ENCODE measurements at regions of chr17 and their contacts with region 1.

Region 1: GRCh38 chr17:42843358-42843934 is 934 bp upstream of the AOC2 start:
- DNase-seq: peak in 1 of 10 donors; percentile 57
- H3K4me3 ChIP-seq: no peak overlapping the region
- H3K27ac ChIP-seq: no peak overlapping the region
- H3K27me3 ChIP-seq: no peaks in the 10 kb centered on the region
- CTCF ChIP-seq: peak; percentile 65 to 93 (median 81)

Region 2: DNA sequence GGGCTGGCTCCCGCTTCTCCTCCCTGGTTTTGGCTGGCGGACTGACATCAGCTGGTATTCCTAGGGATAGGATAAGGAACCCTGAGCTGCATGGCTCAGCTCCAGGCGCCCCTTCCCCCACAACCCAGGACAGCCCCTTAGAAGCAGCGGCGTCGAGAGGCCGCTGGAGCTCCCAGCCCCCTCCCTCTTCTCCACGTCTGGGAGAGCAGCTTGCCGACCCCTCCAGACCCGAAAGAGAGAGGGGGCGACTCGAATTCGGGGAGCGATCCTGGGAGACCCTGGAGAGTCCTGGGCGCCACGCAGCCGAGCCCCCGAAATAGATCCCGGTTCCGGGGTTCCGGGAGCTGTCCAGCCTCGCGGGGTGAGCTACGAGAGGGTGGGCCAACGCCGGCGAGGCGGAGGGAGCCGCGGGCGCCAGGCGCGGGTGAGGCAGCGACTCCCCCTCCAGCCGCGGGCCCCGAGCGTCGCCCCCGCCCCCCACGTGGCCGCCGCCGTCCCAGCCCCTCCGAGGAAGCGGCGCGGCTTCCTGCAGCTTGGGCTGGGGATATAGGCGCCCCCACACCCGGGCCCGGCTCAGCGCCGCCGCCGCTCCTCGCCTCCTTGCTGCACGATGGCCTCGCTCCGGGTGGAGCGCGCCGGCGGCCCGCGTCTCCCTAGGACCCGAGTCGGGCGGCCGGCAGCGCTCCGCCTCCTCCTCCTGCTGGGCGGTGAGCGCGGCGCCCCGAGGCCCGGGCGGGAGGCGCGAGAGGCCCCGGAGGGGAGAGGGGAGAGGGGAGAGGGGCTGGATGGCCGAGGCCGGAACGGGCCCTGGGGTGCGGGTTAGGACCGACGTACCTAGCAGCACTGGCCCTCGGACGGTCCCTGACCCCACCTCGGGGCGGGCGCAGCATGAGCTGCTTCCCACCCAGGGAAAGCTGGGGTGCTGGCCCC is 82.5 kb before region 1 on chr17 and contains the start of gene RAMP2:
- intact Hi-C with region 1: no loop called
- DNase-seq: no peak
- H3K4me3 ChIP-seq: peak within 1 kb of the TSS; percentile 39 to 72 (median 57)
- H3K27ac ChIP-seq: peak within 1 kb of the TSS in 43 of 59 donors; percentile 2 to 77 (median 47)
- H3K27me3 ChIP-seq: peaks cover 0 to 21% (median 0%) of the 10 kb centered on the region in 45 donors
- CTCF ChIP-seq: peak in 1 of 56 donors; percentile 10
- total RNA-seq, gene RAMP2: 2.8 to 31.2 (median 12.5) TPM

Region 3: GRCh38 chr17:42937712-42938596 is 94.5 kb after region 1 on chr17:
- intact Hi-C with region 1: loop called (anchors 5 kb)
- DNase-seq: peak in 9 of 10 donors; percentile 6 to 57 (median 46)
- H3K4me3 ChIP-seq: no peak overlapping the region
- H3K27ac ChIP-seq: no peak overlapping the region
- H3K27me3 ChIP-seq: no peaks in the 10 kb centered on the region
- CTCF ChIP-seq: peak in 55 of 56 donors; percentile 29 to 81 (median 63)

Region 4: GRCh38 chr17:42989726-42990652 is 146.5 kb after region 1 on chr17:
- intact Hi-C with region 1: loop called (anchors 5 to 10 kb)
- DNase-seq: no peak
- H3K4me3 ChIP-seq: no peak overlapping the region
- H3K27ac ChIP-seq: peak overlapping the region in 45 of 59 donors; percentile 9 to 83 (median 60)
- H3K27me3 ChIP-seq: no peaks in the 10 kb centered on the region
- CTCF ChIP-seq: no peak

Region 5: DNA sequence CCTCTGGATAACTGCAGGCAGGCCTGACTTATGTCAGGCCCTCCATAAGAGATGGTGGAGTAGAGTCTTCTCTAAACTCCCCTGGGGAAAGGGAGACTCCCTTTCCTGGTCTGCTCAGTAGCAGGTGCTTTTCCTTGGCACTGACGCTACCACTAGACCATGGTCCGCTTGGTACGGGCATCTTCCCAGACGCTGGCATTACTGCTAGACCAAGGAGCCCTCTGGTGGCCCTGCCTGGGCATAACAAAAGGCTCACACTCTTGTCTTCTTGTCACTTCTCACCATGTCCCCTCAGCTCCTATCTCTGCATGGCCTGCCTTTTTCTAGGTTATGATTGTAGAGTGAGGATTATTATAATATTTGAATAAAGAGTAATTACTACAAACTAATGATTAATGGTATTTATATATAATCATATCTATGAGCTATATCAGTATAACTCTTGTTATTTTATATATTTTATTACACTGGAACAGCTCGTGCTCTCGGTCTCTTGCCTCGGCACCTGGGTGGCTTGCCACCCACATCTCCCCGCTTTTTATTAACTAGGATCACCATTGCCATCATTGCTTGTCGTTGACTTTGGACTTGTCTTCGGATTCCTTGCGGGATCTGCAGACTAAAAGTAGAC is 495.6 kb after region 1 on chr17:
- intact Hi-C with region 1: loop called in 1 of 2 experiments (anchors 5 kb)
- DNase-seq: peak; percentile 86 to 96 (median 89)
- H3K4me3 ChIP-seq: peak overlapping the region in 3 of 59 donors; percentile 2 to 19 (median 11)
- H3K27ac ChIP-seq: peak overlapping the region in 51 of 59 donors; percentile 26 to 91 (median 76)
- H3K27me3 ChIP-seq: no peaks in the 10 kb centered on the region
- CTCF ChIP-seq: peak; percentile 50 to 93 (median 82)